A549 (cell line): ENCODE measurements at regions of chr2 and their contacts with region 1.

Region 1: GRCh38 chr2:42047488-42048298 is at the start of gene PKDCC:
- DNase-seq: peak; percentile 84 to 91
- ATAC-seq: peak; percentile 76 to 83
- H3K4me3 ChIP-seq: peak within 1 kb of the TSS; percentile 63
- H3K27ac ChIP-seq: peak within 1 kb of the TSS; percentile 79 to 96
- H3K4me1 ChIP-seq: peaks cover 52% of the 10 kb centered on the region
- CTCF ChIP-seq: no peak
- EP300 ChIP-seq: no peak
- POLR2A ChIP-seq: peak; percentile 41; the same call in 1 of the 2 replicates
- RAD21 ChIP-seq: 0 out of 5 replicates have a peak, but pooled peaks have one; percentile 5 to 23
- polyA plus RNA-seq, gene PKDCC: 30.0 and 42.9 TPM in 2 replicates

Region 2: GRCh38 chr2:41928526-41928925 is 119.2 kb before region 1 on chr2:
- CTCF ChIA-PET with region 1: interaction called, 4 read pairs
- POLR2A ChIA-PET with region 1: interaction called, 14 read pairs
- DNase-seq: peak; percentile 66 to 72
- ATAC-seq: peak; percentile 76 to 77
- H3K4me3 ChIP-seq: no peak overlapping the region
- H3K27ac ChIP-seq: peak overlapping the region; percentile 74 to 91
- H3K4me1 ChIP-seq: peaks cover 65% of the 10 kb centered on the region
- CTCF ChIP-seq: no peak
- EP300 ChIP-seq: no peak
- POLR2A ChIP-seq: no peak
- RAD21 ChIP-seq: no peak

Region 3: GRCh38 chr2:41966431-41966893 is 81.2 kb before region 1 on chr2:
- CTCF ChIA-PET with region 1: no interaction called
- POLR2A ChIA-PET with region 1: interaction called, 18 read pairs
- DNase-seq: peak; percentile 79 to 89
- ATAC-seq: peak; percentile 81 to 89
- H3K4me3 ChIP-seq: no peak overlapping the region
- H3K27ac ChIP-seq: peak overlapping the region; percentile 74 to 83
- H3K4me1 ChIP-seq: peaks cover 61% of the 10 kb centered on the region
- CTCF ChIP-seq: no peak
- EP300 ChIP-seq: peak; percentile 77 to 90; a peak in 3 of 5 replicates
- POLR2A ChIP-seq: no peak
- RAD21 ChIP-seq: peak; percentile 29 to 56; a peak in 4 of 5 replicates

Region 4: GRCh38 chr2:42028571-42029148 is 19.0 kb before region 1 on chr2:
- CTCF ChIA-PET with region 1: interaction called, 14 read pairs
- POLR2A ChIA-PET with region 1: no interaction called
- DNase-seq: no peak
- ATAC-seq: no peak
- H3K4me3 ChIP-seq: no peak overlapping the region
- H3K27ac ChIP-seq: no peak overlapping the region
- H3K4me1 ChIP-seq: no peaks in the 10 kb centered on the region
- CTCF ChIP-seq: no peak
- EP300 ChIP-seq: no peak
- POLR2A ChIP-seq: no peak
- RAD21 ChIP-seq: no peak